Naive thymus-derived CD4-positive, alpha-beta T cell (primary cell): ENCODE measurements at regions of chr2 and their contacts with region 1.

Region 1: DNA sequence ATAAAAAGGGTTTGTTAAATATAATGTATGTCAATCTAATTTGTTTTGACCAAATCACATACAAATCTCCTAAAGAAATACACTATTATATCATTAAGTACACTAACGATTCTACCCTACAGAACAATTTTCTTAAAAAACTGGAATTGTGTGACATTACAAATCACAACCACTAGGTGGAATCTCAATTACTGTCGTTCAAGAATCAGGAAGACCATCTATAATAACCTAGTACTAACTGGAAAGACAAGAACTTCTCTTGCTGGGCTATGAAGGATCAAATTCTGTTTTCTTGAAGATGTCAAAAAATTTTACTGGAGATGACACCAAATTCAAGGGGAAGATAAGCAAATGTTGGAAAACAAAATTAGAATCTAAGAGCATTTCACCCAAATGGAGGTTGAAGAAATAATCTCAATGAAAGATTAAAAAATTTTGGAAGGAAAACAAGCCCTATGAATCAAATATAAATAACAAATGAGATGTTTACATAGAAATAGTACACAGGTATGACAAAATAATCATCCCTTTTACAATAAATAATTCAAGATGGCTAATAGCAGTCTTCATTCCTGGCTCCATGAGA is 110.9 kb downstream of the STK39 start:
- DNase-seq: peak in 5 of 9 donors; percentile 14 to 36 (median 27)
- ATAC-seq: peak; percentile 67
- H3K4me3 ChIP-seq: no peak overlapping the region
- H3K4me3 Mint-ChIP-seq: no peak overlapping the region
- H3K27ac ChIP-seq: no peak overlapping the region
- H3K27ac Mint-ChIP-seq: peak overlapping the region in 2 of 9 donors; percentile 4 to 44
- H3K4me1 ChIP-seq: no peaks in the 10 kb centered on the region
- H3K4me1 Mint-ChIP-seq: peaks cover 4 to 11% (median 8%) of the 10 kb centered on the region in 7 donors
- H3K27me3 ChIP-seq: no peaks in the 10 kb centered on the region
- H3K27me3 Mint-ChIP-seq: no peaks in the 10 kb centered on the region

Region 2: DNA sequence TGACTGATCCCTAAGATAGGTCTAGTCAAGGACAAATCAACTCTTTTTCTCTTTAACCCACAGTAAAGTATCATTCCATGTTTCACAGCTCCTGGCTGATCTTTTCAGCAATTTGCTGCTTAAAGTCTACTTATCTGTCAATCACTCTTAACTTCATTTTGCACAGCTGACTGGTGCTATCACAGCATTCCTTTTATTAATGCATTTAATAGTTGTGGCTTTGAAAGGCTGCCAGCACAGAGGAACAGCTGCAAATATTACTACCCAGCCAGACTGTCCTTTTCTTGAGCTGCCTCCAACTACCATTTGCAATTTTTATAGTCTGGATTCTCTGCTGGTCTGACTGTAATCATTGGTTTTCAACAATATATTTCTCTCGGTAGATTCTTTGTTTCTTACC is 192.6 kb before region 1 on chr2:
- CTCF ChIA-PET with region 1: no interaction called
- POLR2A ChIA-PET with region 1: no interaction called
- intact Hi-C with region 1: no loop called
- DNase-seq: no peak
- ATAC-seq: no peak
- H3K4me3 ChIP-seq: no peak overlapping the region
- H3K4me3 Mint-ChIP-seq: no peak overlapping the region
- H3K27ac ChIP-seq: no peak overlapping the region
- H3K27ac Mint-ChIP-seq: no peak overlapping the region
- H3K4me1 ChIP-seq: no peaks in the 10 kb centered on the region
- H3K4me1 Mint-ChIP-seq: no peaks in the 10 kb centered on the region
- H3K27me3 ChIP-seq: no peaks in the 10 kb centered on the region
- H3K27me3 Mint-ChIP-seq: peaks cover 14 to 24% (median 19%) of the 10 kb centered on the region in 5 donors

Region 3: DNA sequence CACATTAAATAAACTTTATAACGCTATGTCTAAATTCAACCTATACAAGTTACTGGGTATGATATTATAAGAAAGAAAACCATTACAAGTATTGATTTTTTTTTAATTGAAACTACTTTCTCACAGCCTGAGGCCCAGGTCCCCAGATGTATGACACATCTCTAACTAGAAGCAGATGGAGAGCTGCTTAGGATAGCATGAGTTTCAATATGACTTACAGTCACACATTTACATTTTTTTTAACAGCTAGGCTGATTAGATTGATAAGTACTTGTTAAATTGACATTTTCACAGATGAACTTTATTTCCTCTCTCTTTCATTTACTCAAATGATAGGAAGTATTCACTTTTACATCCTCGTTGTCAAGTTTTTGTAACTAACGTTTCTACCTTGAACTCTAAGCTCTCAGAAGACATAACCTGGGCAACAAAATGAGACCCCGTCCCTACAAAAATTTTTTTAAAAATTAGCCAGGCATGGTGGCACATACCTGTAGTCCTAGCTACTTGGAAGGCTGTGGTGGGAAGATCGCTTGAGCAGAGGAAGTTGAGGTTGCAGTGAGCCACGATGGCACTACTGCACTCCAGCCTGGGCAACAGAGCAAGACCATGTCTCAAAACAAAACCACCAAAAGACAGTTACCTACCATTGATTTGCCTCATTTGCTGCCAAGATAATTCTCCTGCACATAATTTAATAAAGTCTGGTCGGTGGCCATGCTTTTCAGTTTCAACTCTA is 58.5 kb after region 1 on chr2:
- CTCF ChIA-PET with region 1: no interaction called
- POLR2A ChIA-PET with region 1: interaction called, 3 read pairs
- intact Hi-C with region 1: loop called in 1 of 2 experiments (anchors 2 kb)
- DNase-seq: peak in 3 of 9 donors; percentile 6 to 11 (median 7)
- ATAC-seq: peak; percentile 66
- H3K4me3 ChIP-seq: peak overlapping the region; percentile 14
- H3K4me3 Mint-ChIP-seq: peak overlapping the region; percentile 18 to 78 (median 61)
- H3K27ac ChIP-seq: peak overlapping the region; percentile 14
- H3K27ac Mint-ChIP-seq: peak overlapping the region; percentile 10 to 91 (median 80)
- H3K4me1 ChIP-seq: peaks cover 34 to 50% of the 10 kb centered on the region in 2 donors
- H3K4me1 Mint-ChIP-seq: peaks cover 49 to 90% (median 73%) of the 10 kb centered on the region in 7 donors
- H3K27me3 ChIP-seq: no peaks in the 10 kb centered on the region
- H3K27me3 Mint-ChIP-seq: no peaks in the 10 kb centered on the region

Region 4: DNA sequence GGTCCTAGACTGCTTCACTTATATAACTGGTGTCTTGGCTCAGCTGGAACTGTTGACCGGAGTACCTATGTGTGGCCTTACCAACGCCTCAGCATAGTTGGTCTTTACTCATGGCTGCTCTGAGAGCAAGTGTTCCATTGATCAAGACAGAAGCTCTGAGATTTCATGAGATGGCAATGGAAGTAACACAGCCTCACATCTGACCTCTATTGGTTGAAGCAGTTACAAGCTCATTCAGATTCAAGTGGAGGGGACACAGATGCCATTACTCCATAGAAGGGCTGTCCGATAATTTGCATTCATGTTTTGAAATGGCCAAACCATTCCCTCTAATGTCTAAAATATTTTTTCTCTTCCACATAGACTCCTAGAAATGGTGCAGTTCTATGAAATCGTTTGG is 157.3 kb after region 1 on chr2:
- CTCF ChIA-PET with region 1: no interaction called
- POLR2A ChIA-PET with region 1: no interaction called
- intact Hi-C with region 1: loop called in 1 of 2 experiments (anchors 1 kb)
- DNase-seq: no peak
- ATAC-seq: no peak
- H3K4me3 ChIP-seq: no peak overlapping the region
- H3K4me3 Mint-ChIP-seq: no peak overlapping the region
- H3K27ac ChIP-seq: no peak overlapping the region
- H3K27ac Mint-ChIP-seq: no peak overlapping the region
- H3K4me1 ChIP-seq: no peaks in the 10 kb centered on the region
- H3K4me1 Mint-ChIP-seq: peaks cover 0 to 2% (median 0%) of the 10 kb centered on the region in 7 donors
- H3K27me3 ChIP-seq: no peaks in the 10 kb centered on the region
- H3K27me3 Mint-ChIP-seq: peaks cover 0 to 4% (median 0%) of the 10 kb centered on the region in 5 donors

Region 5: GRCh38 chr2:168336864-168337263 is 200.4 kb after region 1 on chr2:
- CTCF ChIA-PET with region 1: interaction called, 14 read pairs
- POLR2A ChIA-PET with region 1: interaction called, 3 read pairs
- intact Hi-C with region 1: loop called (anchors 1 kb)
- DNase-seq: peak in 8 of 9 donors; percentile 11 to 58 (median 48)
- ATAC-seq: peak; percentile 93
- H3K4me3 ChIP-seq: no peak overlapping the region
- H3K4me3 Mint-ChIP-seq: peak overlapping the region in 1 of 10 donors; percentile 5
- H3K27ac ChIP-seq: no peak overlapping the region
- H3K27ac Mint-ChIP-seq: no peak overlapping the region
- H3K4me1 ChIP-seq: no peaks in the 10 kb centered on the region
- H3K4me1 Mint-ChIP-seq: peaks cover 0 to 4% (median 0%) of the 10 kb centered on the region in 7 donors
- H3K27me3 ChIP-seq: no peaks in the 10 kb centered on the region
- H3K27me3 Mint-ChIP-seq: peaks cover 0 to 10% (median 0%) of the 10 kb centered on the region in 5 donors

Region 6: GRCh38 chr2:168687314-168687713 is 550.8 kb after region 1 on chr2:
- CTCF ChIA-PET with region 1: interaction called, 3 read pairs
- POLR2A ChIA-PET with region 1: no interaction called
- intact Hi-C with region 1: loop called in 1 of 2 experiments (anchors 1 kb)
- DNase-seq: peak in 7 of 9 donors; percentile 12 to 50 (median 31)
- ATAC-seq: no peak
- H3K4me3 ChIP-seq: no peak overlapping the region
- H3K4me3 Mint-ChIP-seq: no peak overlapping the region
- H3K27ac ChIP-seq: no peak overlapping the region
- H3K27ac Mint-ChIP-seq: no peak overlapping the region
- H3K4me1 ChIP-seq: no peaks in the 10 kb centered on the region
- H3K4me1 Mint-ChIP-seq: peaks cover 3 to 28% (median 9%) of the 10 kb centered on the region in 7 donors
- H3K27me3 ChIP-seq: no peaks in the 10 kb centered on the region
- H3K27me3 Mint-ChIP-seq: no peaks in the 10 kb centered on the region

Region 7: DNA sequence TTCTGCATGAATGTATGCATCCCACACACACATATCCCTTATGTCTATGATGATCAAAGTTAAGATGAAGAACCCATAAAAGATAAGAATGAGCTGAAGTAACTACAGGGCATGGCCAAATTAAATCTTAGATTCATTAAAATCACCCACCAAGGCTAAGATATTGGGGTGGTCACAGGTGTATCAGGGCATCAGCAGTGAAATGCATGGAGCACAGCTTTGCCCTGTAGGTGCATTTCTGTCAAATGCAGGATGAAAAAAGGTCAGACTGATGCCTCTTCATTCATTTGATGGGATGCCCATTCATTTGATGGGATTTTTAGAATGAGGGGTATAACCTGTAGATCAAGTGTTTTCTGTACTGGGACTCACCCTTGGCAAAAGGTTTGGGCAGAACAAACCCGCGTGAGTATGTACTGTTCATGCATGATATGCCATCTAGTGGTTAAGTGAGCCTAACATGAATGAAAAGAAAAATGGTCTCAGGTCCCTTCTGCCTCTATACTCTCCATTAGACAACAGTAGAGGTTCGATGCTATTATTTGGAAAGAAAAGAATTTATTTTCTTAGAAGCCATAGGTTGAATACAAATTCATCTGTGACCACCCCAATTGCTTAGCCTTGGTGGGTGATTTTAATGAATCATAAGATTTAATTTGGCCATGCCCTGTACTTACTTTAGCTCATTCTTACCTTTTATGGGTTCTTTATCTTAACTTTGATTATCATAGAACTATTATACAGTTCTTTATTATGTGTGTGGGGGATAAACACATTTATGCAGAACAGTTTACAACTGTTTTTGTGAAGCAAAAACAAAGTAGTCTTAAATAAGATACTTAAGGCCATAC is 622.7 kb after region 1 on chr2:
- CTCF ChIA-PET with region 1: no interaction called
- POLR2A ChIA-PET with region 1: no interaction called
- intact Hi-C with region 1: loop called in 1 of 2 experiments (anchors 1 kb)
- DNase-seq: peak in 7 of 9 donors; percentile 12 to 53 (median 45)
- ATAC-seq: peak; percentile 87
- H3K4me3 ChIP-seq: no peak overlapping the region
- H3K4me3 Mint-ChIP-seq: no peak overlapping the region
- H3K27ac ChIP-seq: no peak overlapping the region
- H3K27ac Mint-ChIP-seq: peak overlapping the region in 1 of 9 donors; percentile 14
- H3K4me1 ChIP-seq: peaks cover 21 to 42% of the 10 kb centered on the region in 2 donors
- H3K4me1 Mint-ChIP-seq: peaks cover 21 to 52% (median 48%) of the 10 kb centered on the region in 7 donors
- H3K27me3 ChIP-seq: no peaks in the 10 kb centered on the region
- H3K27me3 Mint-ChIP-seq: no peaks in the 10 kb centered on the region

Region 8: GRCh38 chr2:168920504-168921157 is 784.1 kb after region 1 on chr2:
- CTCF ChIA-PET with region 1: interaction called, 3 read pairs
- POLR2A ChIA-PET with region 1: no interaction called
- intact Hi-C with region 1: loop called (anchors 1 to 5 kb)
- DNase-seq: peak in 6 of 9 donors; percentile 15 to 51 (median 42)
- ATAC-seq: no peak
- H3K4me3 ChIP-seq: no peak overlapping the region
- H3K4me3 Mint-ChIP-seq: no peak overlapping the region
- H3K27ac ChIP-seq: no peak overlapping the region
- H3K27ac Mint-ChIP-seq: peak overlapping the region in 1 of 9 donors; percentile 8
- H3K4me1 ChIP-seq: no peaks in the 10 kb centered on the region
- H3K4me1 Mint-ChIP-seq: peaks cover 0 to 8% (median 0%) of the 10 kb centered on the region in 7 donors
- H3K27me3 ChIP-seq: no peaks in the 10 kb centered on the region
- H3K27me3 Mint-ChIP-seq: peaks cover 18 to 58% (median 25%) of the 10 kb centered on the region in 5 donors